CD4-positive, alpha-beta T cell (primary cell): ENCODE measurements at regions of chr2 and their contacts with region 1.

Region 1: GRCh38 chr2:200578778-200579177 is 7.0 kb upstream of the AOX1 start:
- DNase-seq: peak in 3 of 14 experiments; percentile 24 to 45 (median 39)
- ATAC-seq: peak; percentile 43
- H3K4me3 ChIP-seq: no peak overlapping the region
- H3K4me3 Mint-ChIP-seq: no peak overlapping the region
- H3K27ac ChIP-seq: no peak overlapping the region
- H3K27ac Mint-ChIP-seq: no peak overlapping the region
- H3K4me1 ChIP-seq: no peaks in the 10 kb centered on the region
- H3K4me1 Mint-ChIP-seq: no peaks in the 10 kb centered on the region
- H3K27me3 ChIP-seq: no peaks in the 10 kb centered on the region
- H3K27me3 Mint-ChIP-seq: no peaks in the 10 kb centered on the region
- CTCF ChIP-seq: peak; percentile 31

Region 2: GRCh38 chr2:200703127-200703925 is 124.5 kb after region 1 on chr2:
- CTCF ChIA-PET with region 1: interaction called, 4 read pairs
- POLR2A ChIA-PET with region 1: no interaction called
- intact Hi-C with region 1: loop called (anchors 5 kb)
- DNase-seq: peak in 3 of 14 experiments; percentile 29 to 54 (median 50)
- ATAC-seq: peak; percentile 49
- H3K4me3 ChIP-seq: no peak overlapping the region
- H3K4me3 Mint-ChIP-seq: no peak overlapping the region
- H3K27ac ChIP-seq: no peak overlapping the region
- H3K27ac Mint-ChIP-seq: no peak overlapping the region
- H3K4me1 ChIP-seq: no peaks in the 10 kb centered on the region
- H3K4me1 Mint-ChIP-seq: no peaks in the 10 kb centered on the region
- H3K27me3 ChIP-seq: no peaks in the 10 kb centered on the region
- H3K27me3 Mint-ChIP-seq: peaks cover 5% of the 10 kb centered on the region
- CTCF ChIP-seq: peak; percentile 29

Region 3: GRCh38 chr2:200735061-200735460 is 156.3 kb after region 1 on chr2:
- CTCF ChIA-PET with region 1: no interaction called
- POLR2A ChIA-PET with region 1: no interaction called
- intact Hi-C with region 1: loop called (anchors 5 to 10 kb)
- DNase-seq: peak in 1 of 14 experiments; percentile 10
- ATAC-seq: no peak
- H3K4me3 ChIP-seq: no peak overlapping the region
- H3K4me3 Mint-ChIP-seq: no peak overlapping the region
- H3K27ac ChIP-seq: no peak overlapping the region
- H3K27ac Mint-ChIP-seq: no peak overlapping the region
- H3K4me1 ChIP-seq: no peaks in the 10 kb centered on the region
- H3K4me1 Mint-ChIP-seq: no peaks in the 10 kb centered on the region
- H3K27me3 ChIP-seq: peaks cover 0 to 4% of the 10 kb centered on the region in 2 experiments
- H3K27me3 Mint-ChIP-seq: peaks cover 27% of the 10 kb centered on the region
- CTCF ChIP-seq: no peak

Region 4: GRCh38 chr2:201059961-201060755 is 481.4 kb after region 1 on chr2:
- CTCF ChIA-PET with region 1: no interaction called
- POLR2A ChIA-PET with region 1: no interaction called
- intact Hi-C with region 1: loop called in 1 of 2 experiments (anchors 5 kb)
- DNase-seq: peak in 2 of 14 experiments; percentile 15 to 44
- ATAC-seq: peak; percentile 29
- H3K4me3 ChIP-seq: no peak overlapping the region
- H3K4me3 Mint-ChIP-seq: no peak overlapping the region
- H3K27ac ChIP-seq: no peak overlapping the region
- H3K27ac Mint-ChIP-seq: peak overlapping the region; percentile 32
- H3K4me1 ChIP-seq: peaks cover 9% of the 10 kb centered on the region
- H3K4me1 Mint-ChIP-seq: peaks cover 57% of the 10 kb centered on the region
- H3K27me3 ChIP-seq: no peaks in the 10 kb centered on the region
- H3K27me3 Mint-ChIP-seq: no peaks in the 10 kb centered on the region
- CTCF ChIP-seq: no peak

Region 5: GRCh38 chr2:201171259-201171814 is 592.6 kb after region 1 on chr2:
- CTCF ChIA-PET with region 1: no interaction called
- POLR2A ChIA-PET with region 1: no interaction called
- intact Hi-C with region 1: loop called (anchors 5 to 10 kb)
- DNase-seq: no peak
- ATAC-seq: no peak
- H3K4me3 ChIP-seq: no peak overlapping the region
- H3K4me3 Mint-ChIP-seq: no peak overlapping the region
- H3K27ac ChIP-seq: no peak overlapping the region
- H3K27ac Mint-ChIP-seq: peak overlapping the region; percentile 51
- H3K4me1 ChIP-seq: no peaks in the 10 kb centered on the region
- H3K4me1 Mint-ChIP-seq: no peaks in the 10 kb centered on the region
- H3K27me3 ChIP-seq: no peaks in the 10 kb centered on the region
- H3K27me3 Mint-ChIP-seq: no peaks in the 10 kb centered on the region
- CTCF ChIP-seq: no peak